AG04450 (cell line): ENCODE measurements at regions of chr3 and their contacts with region 1.

Region 1: DNA sequence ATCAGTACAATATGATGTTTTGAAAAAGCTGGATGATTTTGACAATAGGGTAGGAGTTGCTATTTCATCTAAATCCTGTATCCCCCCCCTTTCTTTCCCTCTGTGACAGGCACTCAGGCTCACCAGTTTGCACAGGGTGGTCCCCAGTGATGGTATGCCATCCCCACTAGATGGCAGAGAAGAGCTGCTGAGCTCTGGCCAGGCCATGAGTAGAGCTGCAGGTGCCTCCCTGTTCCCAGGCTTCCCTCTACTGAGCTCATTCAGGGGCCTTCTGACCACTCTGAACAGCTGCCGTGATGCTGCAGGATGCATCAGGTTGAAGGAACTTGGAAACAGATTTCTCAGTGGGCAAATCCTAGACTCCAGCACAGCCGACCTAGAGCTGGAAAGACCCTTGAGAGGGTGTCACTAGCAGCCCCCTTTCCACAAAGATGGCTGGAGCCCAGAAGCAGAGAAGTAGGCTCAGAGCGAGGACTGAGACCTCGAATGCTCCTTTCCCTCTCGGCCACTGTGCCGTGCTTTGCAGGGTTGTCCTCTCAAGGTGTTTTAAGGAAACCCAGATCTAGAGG is 45.1 kb downstream of the EFCAB12 start:
- DNase-seq: peak; percentile 49
- H3K4me3 ChIP-seq: no peak overlapping the region
- H3K27ac ChIP-seq: no peak overlapping the region
- H3K27me3 ChIP-seq: no peaks in the 10 kb centered on the region
- CTCF ChIP-seq: peak; percentile 91

Region 2: GRCh38 chr3:128123538-128124368 is 1259.6 kb before region 1 on chr3 and contains the start of gene RUVBL1:
- CTCF ChIA-PET with region 1: no interaction called
- POLR2A ChIA-PET with region 1: no interaction called
- DNase-seq: peak; percentile 90
- H3K4me3 ChIP-seq: peak within 1 kb of the TSS; percentile 97
- H3K27ac ChIP-seq: peak within 1 kb of the TSS; percentile 82
- H3K27me3 ChIP-seq: peaks cover 3% of the 10 kb centered on the region
- CTCF ChIP-seq: no peak
- polyA plus RNA-seq, gene RUVBL1: 79.5 and 83.3 TPM in 2 replicates

Region 3: DNA sequence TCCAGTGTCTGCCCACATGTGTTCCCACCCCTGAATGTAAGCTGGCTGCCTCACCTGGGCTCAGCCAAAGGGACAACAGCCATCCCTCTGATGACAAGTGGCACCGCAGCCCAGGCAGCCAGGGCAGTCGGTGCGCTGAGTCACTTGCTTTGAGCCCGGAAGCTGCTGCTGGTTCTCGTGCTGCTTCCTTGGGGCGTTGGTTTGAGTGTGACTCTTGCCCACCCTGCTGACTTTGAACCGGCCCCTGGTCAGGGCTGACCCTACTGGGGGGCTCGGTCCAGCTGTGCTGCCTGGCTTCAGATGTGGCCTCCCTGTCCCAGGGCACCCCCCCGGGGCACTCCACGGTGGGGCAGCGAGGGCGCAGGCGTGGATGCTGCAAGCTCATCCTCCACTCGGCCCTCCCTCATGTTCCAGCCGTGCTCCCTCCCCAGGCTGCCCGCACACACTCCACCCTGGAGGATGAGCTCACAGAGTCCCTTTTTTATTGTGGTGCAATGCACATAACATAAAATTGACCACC is 17.0 kb before region 1 on chr3:
- CTCF ChIA-PET with region 1: interaction called, 13 read pairs
- POLR2A ChIA-PET with region 1: no interaction called
- DNase-seq: no peak
- H3K4me3 ChIP-seq: no peak overlapping the region
- H3K27ac ChIP-seq: no peak overlapping the region
- H3K27me3 ChIP-seq: peaks cover 10% of the 10 kb centered on the region
- CTCF ChIP-seq: no peak

Region 4: GRCh38 chr3:129399145-129399894 is 15.9 kb after region 1 on chr3:
- CTCF ChIA-PET with region 1: interaction called, 14 read pairs
- POLR2A ChIA-PET with region 1: no interaction called
- DNase-seq: peak; percentile 90
- H3K4me3 ChIP-seq: peak overlapping the region; percentile 87
- H3K27ac ChIP-seq: peak overlapping the region; percentile 68
- H3K27me3 ChIP-seq: no peaks in the 10 kb centered on the region
- CTCF ChIP-seq: peak; percentile 81

Region 5: GRCh38 chr3:129413687-129414506 is 30.5 kb after region 1 on chr3:
- CTCF ChIA-PET with region 1: interaction called, 20 read pairs
- POLR2A ChIA-PET with region 1: interaction called, 3 read pairs
- DNase-seq: peak; percentile 88
- H3K4me3 ChIP-seq: no peak overlapping the region
- H3K27ac ChIP-seq: peak overlapping the region; percentile 96
- H3K27me3 ChIP-seq: no peaks in the 10 kb centered on the region
- CTCF ChIP-seq: no peak

Region 6: GRCh38 chr3:129439817-129440617 is 56.6 kb after region 1 on chr3 and contains the starts of genes IFT122 and MBD4:
- CTCF ChIA-PET with region 1: interaction called, 21 read pairs
- POLR2A ChIA-PET with region 1: interaction called, 4 read pairs
- DNase-seq: peak; percentile 99
- H3K4me3 ChIP-seq: peak within 1 kb of the TSS; percentile 97
- H3K27ac ChIP-seq: peak within 1 kb of the TSS; percentile 95
- H3K27me3 ChIP-seq: no peaks in the 10 kb centered on the region
- CTCF ChIP-seq: no peak
- polyA plus RNA-seq, gene IFT122: 14.0 and 14.3 TPM in 2 replicates
- polyA plus RNA-seq, gene MBD4: 26.2 and 35.6 TPM in 2 replicates